ENCODE measurements at regions of chr2 and their contacts with region 1.

Region 1: GRCh38 chr2:223649554-223650533 is 47.7 kb upstream of the SCG2 start:
- DNase-seq: no peak
- ATAC-seq: no peak
- H3K4me3 ChIP-seq: no peak overlapping the region
- H3K27ac ChIP-seq: no peak overlapping the region
- H3K4me1 ChIP-seq: no peaks in the 10 kb centered on the region
- H3K27me3 ChIP-seq: no peaks in the 10 kb centered on the region
- CTCF ChIP-seq: no peak

Region 2: DNA sequence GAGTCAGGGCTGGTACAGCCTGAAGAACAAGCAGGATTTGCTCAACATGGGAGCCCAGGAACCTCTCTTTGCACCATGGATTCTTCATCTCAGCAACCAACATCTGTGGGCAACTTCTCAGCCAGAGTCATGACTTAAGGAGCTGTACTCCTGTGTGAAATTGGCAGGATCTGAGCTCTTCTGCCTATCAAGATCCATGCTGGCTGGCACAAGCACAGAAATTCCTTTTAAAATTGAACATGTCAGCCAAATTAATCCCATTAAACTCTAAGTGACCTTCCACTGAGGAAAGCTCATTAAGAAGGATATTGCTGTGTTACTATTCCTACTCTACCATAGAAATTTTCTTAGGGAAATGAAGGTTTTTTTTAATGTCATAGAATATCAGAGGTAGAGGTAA is 62.8 kb after region 1 on chr2:
- CTCF ChIA-PET with region 1: no interaction called
- POLR2A ChIA-PET with region 1: no interaction called
- in situ Hi-C with region 1: no loop called
- intact Hi-C with region 1: no loop called
- DNase-seq: no peak
- ATAC-seq: no peak
- H3K4me3 ChIP-seq: no peak overlapping the region
- H3K27ac ChIP-seq: no peak overlapping the region
- H3K4me1 ChIP-seq: no peaks in the 10 kb centered on the region
- H3K27me3 ChIP-seq: no peaks in the 10 kb centered on the region
- CTCF ChIP-seq: no peak

Region 3: GRCh38 chr2:223744573-223744972 is 94.7 kb after region 1 on chr2:
- CTCF ChIA-PET with region 1: no interaction called
- POLR2A ChIA-PET with region 1: no interaction called
- in situ Hi-C with region 1: no loop called
- intact Hi-C with region 1: no loop called
- DNase-seq: no peak
- ATAC-seq: no peak
- H3K4me3 ChIP-seq: no peak overlapping the region
- H3K27ac ChIP-seq: no peak overlapping the region
- H3K4me1 ChIP-seq: no peaks in the 10 kb centered on the region
- H3K27me3 ChIP-seq: no peaks in the 10 kb centered on the region
- CTCF ChIP-seq: no peak

Region 4: GRCh38 chr2:223835701-223836532 is 186.1 kb after region 1 on chr2:
- CTCF ChIA-PET with region 1: no interaction called
- POLR2A ChIA-PET with region 1: interaction called, 13 read pairs
- in situ Hi-C with region 1: no loop called
- intact Hi-C with region 1: no loop called
- DNase-seq: no peak
- ATAC-seq: 0 out of 2 replicates have a peak, but pooled peaks have one; percentile 14
- H3K4me3 ChIP-seq: peak overlapping the region; percentile 74 to 91
- H3K27ac ChIP-seq: peak overlapping the region; percentile 85
- H3K4me1 ChIP-seq: peaks cover 39% of the 10 kb centered on the region
- H3K27me3 ChIP-seq: no peaks in the 10 kb centered on the region
- CTCF ChIP-seq: no peak

Measured in Panc1 (cell line).